Body of pancreas (tissue), 4 donors: ENCODE measurements at regions of chr15 and their contacts with region 1.

Region 1: DNA sequence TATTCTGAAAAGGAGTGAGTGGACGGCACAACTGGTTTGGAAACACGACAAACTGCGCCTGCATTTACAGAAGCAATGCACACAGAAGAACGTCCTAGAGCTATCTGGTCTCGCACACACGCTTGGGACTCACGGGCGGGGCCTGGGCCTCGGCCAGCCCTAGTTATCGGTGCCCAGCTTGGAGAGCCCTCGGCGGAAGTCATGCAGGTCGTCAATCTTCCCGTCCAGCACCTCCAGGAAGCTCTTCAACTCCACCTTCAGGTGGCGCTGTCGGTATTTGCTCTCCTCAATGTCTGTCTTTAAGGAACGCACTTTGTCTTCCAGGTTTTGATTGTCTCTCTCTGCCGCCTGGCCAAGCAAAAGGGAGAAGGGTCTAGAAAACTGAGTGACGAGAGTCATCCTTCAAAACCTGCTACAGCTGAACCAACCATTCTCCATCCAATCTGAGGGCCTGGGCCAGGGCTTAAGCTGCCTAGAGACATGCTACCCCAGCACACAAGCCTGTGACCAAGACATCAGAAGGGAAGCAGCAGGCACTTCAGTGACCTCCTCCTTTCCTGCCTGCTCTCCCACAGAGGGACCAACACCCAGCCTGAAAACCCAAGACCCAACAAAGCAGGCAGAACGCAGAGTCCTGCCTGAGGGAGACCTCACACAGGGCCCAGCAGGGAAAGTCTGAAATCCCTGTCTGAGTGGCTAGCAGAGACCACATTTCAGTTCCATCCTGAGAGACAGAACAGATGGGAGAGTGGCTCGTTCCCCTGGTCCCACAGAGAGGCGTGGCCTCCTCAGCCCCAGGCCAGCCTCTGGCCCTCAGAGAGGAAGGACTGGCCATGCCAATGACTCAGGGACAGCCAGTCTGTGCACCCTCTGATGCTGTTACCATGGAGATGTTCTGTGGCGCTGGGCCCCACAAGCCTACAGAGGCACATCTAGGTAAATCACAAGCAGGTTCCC is 40.4 kb downstream of the WHAMM start:
- DNase-seq: peak; percentile 82 to 90 (median 83)
- ATAC-seq: peak; percentile 83
- H3K4me3 ChIP-seq: no peak overlapping the region
- H3K27ac ChIP-seq: peak overlapping the region in 3 of 4 donors; percentile 66 to 77 (median 73)
- H3K4me1 ChIP-seq: peaks cover 24% of the 10 kb centered on the region
- H3K27me3 ChIP-seq: no peaks in the 10 kb centered on the region
- CTCF ChIP-seq: peak; percentile 62 to 96 (median 80)
- POLR2A ChIP-seq: no peak

Region 2: DNA sequence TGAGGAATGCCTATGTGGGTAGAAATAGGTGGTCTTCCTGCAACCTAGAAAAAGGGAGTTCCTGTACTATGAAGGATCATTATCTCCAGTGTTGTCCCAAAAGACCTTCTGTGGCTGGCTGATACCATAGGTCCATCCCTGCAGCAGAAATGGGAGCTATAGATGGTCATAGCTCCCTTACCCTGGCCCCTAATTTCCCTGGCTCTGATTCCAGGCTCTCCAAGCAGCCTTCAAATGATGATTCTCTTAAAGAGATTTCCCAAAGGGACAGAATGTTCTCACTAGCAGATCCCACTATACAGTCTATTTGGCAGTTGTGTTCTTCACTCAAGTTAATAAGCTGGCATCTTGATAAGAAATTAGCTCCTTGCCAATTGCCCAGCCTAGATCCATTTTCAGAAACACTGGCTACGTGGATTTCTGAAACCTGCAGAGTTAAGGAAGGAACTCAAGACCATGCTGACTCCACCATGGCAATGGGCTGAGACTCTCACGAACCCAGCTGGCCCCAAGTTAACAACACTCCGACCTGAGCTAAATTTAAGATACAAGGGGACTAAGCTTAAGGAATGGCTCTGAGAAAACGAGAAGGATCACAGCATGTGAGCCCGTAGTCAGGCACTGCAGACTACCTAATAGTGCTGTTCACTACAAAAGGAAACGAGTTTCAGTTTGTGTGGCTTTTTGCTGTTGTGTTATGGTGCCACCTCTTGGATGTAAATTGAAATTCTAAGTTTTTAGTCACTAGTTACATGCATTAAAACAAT is 150.3 kb after region 1 on chr15:
- intact Hi-C with region 1: loop called (anchors 5 kb)
- DNase-seq: peak; percentile 27 to 59 (median 46)
- ATAC-seq: peak; percentile 91
- H3K4me3 ChIP-seq: no peak overlapping the region
- H3K27ac ChIP-seq: peak overlapping the region; percentile 66 to 80 (median 74)
- H3K4me1 ChIP-seq: peaks cover 17% of the 10 kb centered on the region
- H3K27me3 ChIP-seq: no peaks in the 10 kb centered on the region
- CTCF ChIP-seq: peak; percentile 42 to 90 (median 81)
- POLR2A ChIP-seq: peak in 1 of 3 donors; percentile 16